OCI-LY7 (cell line): ENCODE measurements at regions of chr3 and their contacts with region 1.

Region 1: DNA sequence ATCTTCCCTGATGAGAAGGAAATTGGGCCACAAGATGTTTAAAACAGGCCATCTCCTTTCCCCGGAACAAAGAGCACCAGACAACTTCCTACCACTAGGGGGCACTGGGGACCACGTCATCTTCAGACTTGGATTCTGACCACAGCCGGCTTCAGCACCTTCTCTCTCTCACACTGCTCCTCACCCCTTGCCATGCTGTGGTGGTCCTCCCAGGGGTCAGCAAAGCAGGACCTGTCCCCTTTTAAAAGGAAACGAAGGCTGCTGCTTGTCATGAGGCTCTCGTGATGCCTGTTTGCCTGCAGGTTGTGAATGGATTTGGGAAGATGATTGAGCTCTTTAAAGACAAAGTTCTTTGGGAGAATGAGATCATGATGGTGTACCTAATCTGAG is 16.2 kb downstream of the RFT1 start:
- DNase-seq: peak; percentile 84
- H3K4me3 ChIP-seq: no peak overlapping the region
- H3K27ac ChIP-seq: no peak overlapping the region
- H3K4me1 ChIP-seq: peaks cover 3% of the 10 kb centered on the region
- CTCF ChIP-seq: peak; percentile 96

Region 2: GRCh38 chr3:53069422-53070068 is 44.5 kb before region 1 on chr3:
- CTCF ChIA-PET with region 1: no interaction called
- POLR2A ChIA-PET with region 1: no interaction called
- intact Hi-C with region 1: no loop called
- DNase-seq: no peak
- H3K4me3 ChIP-seq: no peak overlapping the region
- H3K27ac ChIP-seq: no peak overlapping the region
- H3K4me1 ChIP-seq: peaks cover 14% of the 10 kb centered on the region
- CTCF ChIP-seq: no peak

Region 3: DNA sequence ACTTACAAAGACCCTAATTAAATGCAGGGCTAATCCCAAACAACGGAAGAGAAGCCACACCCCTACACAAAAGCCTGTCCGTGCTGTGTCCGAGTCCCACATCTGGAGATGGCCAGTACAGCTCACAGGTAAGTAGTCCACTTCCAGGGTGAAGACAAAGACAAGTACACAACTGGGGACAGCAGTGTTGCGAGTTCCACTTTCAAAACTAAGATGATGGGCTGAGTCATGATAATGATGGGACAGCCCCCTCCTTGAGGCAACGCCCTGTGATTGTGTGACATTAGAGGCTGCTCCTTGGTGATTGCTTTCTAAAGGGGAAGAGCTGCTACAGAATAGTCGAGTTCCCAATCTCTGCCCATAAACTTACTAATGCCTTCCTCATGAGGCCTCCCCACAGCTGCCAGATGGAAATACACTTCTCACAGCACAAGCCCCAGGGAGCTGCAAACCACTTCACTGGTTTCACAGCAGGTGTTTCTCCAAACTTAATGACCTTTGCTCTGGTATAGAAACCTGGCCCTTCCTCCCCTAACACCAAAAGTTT is 11.3 kb before region 1 on chr3:
- CTCF ChIA-PET with region 1: no interaction called
- POLR2A ChIA-PET with region 1: no interaction called
- intact Hi-C with region 1: no loop called
- DNase-seq: peak; percentile 27
- H3K4me3 ChIP-seq: no peak overlapping the region
- H3K27ac ChIP-seq: no peak overlapping the region
- H3K4me1 ChIP-seq: no peaks in the 10 kb centered on the region
- CTCF ChIP-seq: no peak

Region 4: GRCh38 chr3:53219895-53220483 is 106.0 kb after region 1 on chr3:
- CTCF ChIA-PET with region 1: no interaction called
- POLR2A ChIA-PET with region 1: no interaction called
- intact Hi-C with region 1: loop called (anchors 2 kb)
- DNase-seq: peak; percentile 78
- H3K4me3 ChIP-seq: no peak overlapping the region
- H3K27ac ChIP-seq: no peak overlapping the region
- H3K4me1 ChIP-seq: peaks cover 11% of the 10 kb centered on the region
- CTCF ChIP-seq: peak; percentile 91

Region 5: DNA sequence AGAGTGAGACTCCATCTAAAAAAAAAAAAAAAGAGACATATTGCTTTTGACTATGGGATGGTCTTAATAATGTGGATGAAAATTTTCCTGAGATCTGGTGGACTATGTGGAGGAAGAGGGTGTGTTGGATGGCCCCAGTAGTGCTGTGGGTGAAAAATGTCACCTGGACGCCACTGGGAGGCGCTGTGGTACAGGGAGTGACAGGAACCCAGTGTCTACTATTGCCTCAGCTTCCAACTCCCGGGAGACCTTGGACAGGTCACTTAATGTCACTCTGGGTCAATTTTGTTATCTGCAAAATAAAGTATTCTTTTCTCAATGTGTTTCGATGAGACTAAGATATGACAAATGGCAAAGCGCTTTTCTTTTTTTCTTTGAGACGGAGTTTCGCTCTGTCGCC is 261.0 kb after region 1 on chr3:
- CTCF ChIA-PET with region 1: no interaction called
- POLR2A ChIA-PET with region 1: no interaction called
- intact Hi-C with region 1: no loop called
- DNase-seq: peak; percentile 61
- H3K4me3 ChIP-seq: no peak overlapping the region
- H3K27ac ChIP-seq: no peak overlapping the region
- H3K4me1 ChIP-seq: no peaks in the 10 kb centered on the region
- CTCF ChIP-seq: peak; percentile 90

Region 6: GRCh38 chr3:53709860-53710674 is 596.1 kb after region 1 on chr3:
- CTCF ChIA-PET with region 1: no interaction called
- POLR2A ChIA-PET with region 1: no interaction called
- intact Hi-C with region 1: loop called (anchors 5 kb)
- DNase-seq: peak; percentile 59
- H3K4me3 ChIP-seq: no peak overlapping the region
- H3K27ac ChIP-seq: no peak overlapping the region
- H3K4me1 ChIP-seq: no peaks in the 10 kb centered on the region
- CTCF ChIP-seq: peak; percentile 85

Region 7: GRCh38 chr3:54356261-54357045 is 1242.4 kb after region 1 on chr3:
- CTCF ChIA-PET with region 1: no interaction called
- POLR2A ChIA-PET with region 1: no interaction called
- intact Hi-C with region 1: no loop called
- DNase-seq: no peak
- H3K4me3 ChIP-seq: no peak overlapping the region
- H3K27ac ChIP-seq: no peak overlapping the region
- H3K4me1 ChIP-seq: no peaks in the 10 kb centered on the region
- CTCF ChIP-seq: no peak